Caco-2 (cell line): ENCODE measurements at regions of chr11 and their contacts with region 1.

Region 1: DNA sequence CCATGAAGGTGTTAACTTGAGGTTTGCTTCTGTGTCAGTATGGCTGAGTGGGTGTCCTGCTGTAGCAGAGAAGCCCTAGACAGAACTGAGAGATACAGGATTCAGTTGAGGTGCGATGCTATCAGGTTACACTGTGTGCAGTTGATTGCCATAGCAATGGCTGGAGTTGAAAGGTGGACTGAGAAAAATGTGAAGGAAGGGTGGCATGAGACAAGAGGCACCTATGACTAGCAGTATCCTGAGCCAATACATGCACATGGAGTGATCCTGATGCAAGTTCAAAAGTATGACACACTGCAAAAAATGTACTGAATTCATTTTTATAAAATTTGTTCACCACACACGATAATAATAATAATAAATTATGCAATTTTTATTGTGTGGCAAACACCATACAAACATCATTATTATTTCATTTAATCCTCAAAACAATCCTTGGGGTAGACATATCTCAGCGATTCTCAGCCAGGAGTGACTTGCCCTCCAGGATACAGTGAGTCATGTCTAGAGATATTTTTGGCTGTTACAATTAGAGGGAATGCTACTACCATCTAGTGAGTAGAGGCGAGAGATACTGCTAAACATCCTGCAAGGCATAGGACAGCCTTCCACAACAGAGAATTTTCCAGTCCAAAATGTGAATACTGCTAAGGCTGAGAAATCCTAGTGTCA is 3.9 kb upstream of the PIWIL4 start:
- DNase-seq: no peak
- H3K4me3 ChIP-seq: no peak overlapping the region
- H3K4me3 Mint-ChIP-seq: no peak overlapping the region
- H3K27ac Mint-ChIP-seq: no peak overlapping the region
- H3K4me1 ChIP-seq: peaks cover 16% of the 10 kb centered on the region
- H3K4me1 Mint-ChIP-seq: peaks cover 18% of the 10 kb centered on the region
- H3K27me3 ChIP-seq: no peaks in the 10 kb centered on the region
- H3K27me3 Mint-ChIP-seq: no peaks in the 10 kb centered on the region
- CTCF ChIP-seq: peak in 1 of 2 experiments; percentile 14

Region 2: GRCh38 chr11:94519478-94520084 is 43.7 kb before region 1 on chr11:
- CTCF ChIA-PET with region 1: interaction called, 3 read pairs
- POLR2A ChIA-PET with region 1: no interaction called
- intact Hi-C with region 1: loop called (anchors 1 kb)
- DNase-seq: peak in 1 of 2 experiments; percentile 51
- H3K4me3 ChIP-seq: no peak overlapping the region
- H3K4me3 Mint-ChIP-seq: no peak overlapping the region
- H3K27ac Mint-ChIP-seq: no peak overlapping the region
- H3K4me1 ChIP-seq: peaks cover 11% of the 10 kb centered on the region
- H3K4me1 Mint-ChIP-seq: no peaks in the 10 kb centered on the region
- H3K27me3 ChIP-seq: no peaks in the 10 kb centered on the region
- H3K27me3 Mint-ChIP-seq: peaks cover 5% of the 10 kb centered on the region
- CTCF ChIP-seq: peak; percentile 78 to 86

Region 3: DNA sequence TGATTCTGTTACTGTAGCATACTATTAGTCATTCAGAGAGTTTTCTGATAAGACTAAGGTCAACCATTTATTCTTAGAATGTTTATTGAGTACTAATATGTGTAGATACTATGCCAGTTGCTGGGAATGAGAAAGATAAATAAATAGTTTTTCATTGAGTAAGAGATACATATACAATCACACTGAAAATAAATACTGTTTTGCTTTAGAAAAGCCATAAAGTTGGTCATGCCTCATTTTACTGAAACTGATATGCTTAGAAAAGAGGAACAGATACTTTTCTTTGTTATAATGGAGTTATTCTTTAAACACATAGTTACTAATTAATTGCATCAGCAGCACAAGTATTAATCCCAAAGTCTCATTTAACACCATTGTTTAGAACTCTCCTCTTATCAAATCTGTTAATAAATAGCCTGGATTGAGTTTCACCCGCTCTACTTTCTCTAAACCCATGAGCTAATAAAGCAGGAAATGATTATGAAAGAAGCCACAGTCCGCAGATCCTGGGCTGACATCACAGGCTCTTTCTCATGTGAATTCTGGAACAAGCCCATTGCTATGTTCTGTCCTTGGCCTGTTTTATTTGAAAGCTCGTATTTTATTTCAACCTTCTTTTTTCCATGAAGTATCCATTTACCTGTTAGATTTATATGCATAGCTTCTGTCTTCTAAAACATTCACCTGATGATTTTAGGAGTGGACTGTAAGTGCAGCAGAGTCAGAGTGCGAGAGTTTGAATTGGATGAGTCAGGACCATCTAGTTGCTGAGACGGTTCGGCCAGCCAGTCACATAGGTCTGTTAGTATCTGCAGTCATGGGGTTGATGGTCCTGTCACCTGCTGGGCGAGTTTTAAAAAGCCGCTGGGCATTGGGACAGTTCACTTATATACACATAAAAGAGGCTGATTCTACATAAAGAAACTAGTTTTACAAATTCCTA is 39.4 kb after region 1 on chr11:
- CTCF ChIA-PET with region 1: no interaction called
- POLR2A ChIA-PET with region 1: no interaction called
- intact Hi-C with region 1: no loop called
- DNase-seq: peak; percentile 58 to 79
- H3K4me3 ChIP-seq: no peak overlapping the region
- H3K4me3 Mint-ChIP-seq: peak overlapping the region; percentile 63
- H3K27ac Mint-ChIP-seq: peak overlapping the region; percentile 68
- H3K4me1 ChIP-seq: peaks cover 30% of the 10 kb centered on the region
- H3K4me1 Mint-ChIP-seq: peaks cover 20% of the 10 kb centered on the region
- H3K27me3 ChIP-seq: no peaks in the 10 kb centered on the region
- H3K27me3 Mint-ChIP-seq: no peaks in the 10 kb centered on the region
- CTCF ChIP-seq: peak in 1 of 2 experiments; percentile 39